ENCODE measurements at regions of chr9 and their contacts with region 1.

Region 1: DNA sequence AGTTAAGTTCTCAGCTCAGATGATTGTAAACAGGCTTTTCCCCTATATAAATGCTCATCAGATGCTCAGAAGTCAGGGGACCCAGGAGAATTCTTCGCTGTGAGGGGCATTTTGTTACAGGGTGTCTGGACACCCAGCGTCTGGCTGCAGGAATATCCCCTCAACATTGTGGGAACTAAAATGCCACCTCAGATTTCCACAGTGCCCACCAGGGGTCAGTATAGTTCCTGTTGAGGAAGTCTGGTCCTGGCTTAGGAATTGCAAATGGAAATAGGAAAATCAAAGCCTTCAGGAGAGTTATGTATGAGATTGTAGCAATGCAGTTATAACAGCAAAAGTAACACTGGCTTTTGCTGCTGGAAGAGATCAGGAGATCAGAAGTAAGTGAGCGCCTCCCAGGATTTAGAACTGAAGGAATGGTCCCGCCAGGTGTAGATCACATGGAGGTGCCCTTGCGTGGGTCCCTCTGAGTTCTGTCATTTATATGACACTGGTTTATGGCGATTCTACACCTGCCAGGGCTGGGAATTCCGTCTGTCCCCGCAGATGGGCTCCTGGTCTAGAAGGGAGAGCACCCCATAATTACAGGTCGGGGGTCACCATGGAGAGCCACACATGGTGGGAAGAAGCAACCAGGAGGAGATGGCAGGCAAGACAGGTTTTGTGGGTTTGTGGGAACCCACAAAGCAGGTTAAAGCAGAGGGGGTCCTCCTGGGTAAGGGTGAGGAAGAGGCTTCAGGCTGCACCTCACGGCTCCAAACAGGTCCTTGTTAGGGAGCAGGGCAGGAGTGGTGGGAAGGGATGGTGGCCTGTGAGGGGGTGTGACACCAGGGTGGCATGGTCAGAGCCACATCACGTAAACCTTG is 47.0 kb upstream of the CTSL start:
- DNase-seq: peak in 40 of 42 donors; percentile 47 to 90 (median 72)

Region 2: GRCh38 chr9:87395804-87396479 is 282.9 kb before region 1 on chr9:
- intact Hi-C with region 1: no loop called
- DNase-seq: no peak

Region 3: DNA sequence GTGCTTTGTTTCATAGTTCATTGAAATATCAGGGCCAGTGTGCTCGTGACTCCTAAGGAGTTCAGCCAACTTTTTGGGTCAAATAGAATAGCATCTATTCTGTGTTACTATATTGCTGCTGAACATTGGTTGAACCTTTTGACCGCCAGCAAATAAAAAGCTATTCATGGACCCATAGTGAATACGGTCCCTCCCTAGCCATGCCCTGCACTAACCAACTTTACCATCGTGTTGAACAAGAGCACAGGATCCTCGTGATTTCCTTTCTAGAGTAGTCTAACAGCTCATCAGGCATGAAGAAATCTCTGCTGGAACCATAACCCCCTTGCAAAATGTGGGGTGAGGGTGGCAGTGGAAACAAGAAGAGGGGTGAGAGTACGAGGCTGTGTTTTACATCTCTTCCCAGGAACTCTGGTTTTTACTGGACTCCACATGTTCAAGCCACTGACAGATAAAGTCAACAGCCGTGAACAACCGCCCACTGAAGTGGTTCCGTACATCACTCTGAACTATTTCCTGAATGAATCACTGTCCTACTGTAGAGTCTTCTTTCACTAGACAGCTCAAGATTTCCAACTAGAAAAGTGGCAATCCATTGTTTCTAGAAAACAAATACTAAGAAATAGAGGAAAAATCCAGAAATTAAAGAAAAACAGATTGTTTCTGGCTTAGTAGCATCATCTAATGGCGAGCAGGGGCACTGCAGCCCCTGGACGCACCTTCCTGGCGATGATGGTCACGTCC is 133.7 kb after region 1 on chr9:
- intact Hi-C with region 1: loop called (anchors 5 kb)
- DNase-seq: peak in 19 of 42 donors; percentile 8 to 63 (median 33)

Region 4: DNA sequence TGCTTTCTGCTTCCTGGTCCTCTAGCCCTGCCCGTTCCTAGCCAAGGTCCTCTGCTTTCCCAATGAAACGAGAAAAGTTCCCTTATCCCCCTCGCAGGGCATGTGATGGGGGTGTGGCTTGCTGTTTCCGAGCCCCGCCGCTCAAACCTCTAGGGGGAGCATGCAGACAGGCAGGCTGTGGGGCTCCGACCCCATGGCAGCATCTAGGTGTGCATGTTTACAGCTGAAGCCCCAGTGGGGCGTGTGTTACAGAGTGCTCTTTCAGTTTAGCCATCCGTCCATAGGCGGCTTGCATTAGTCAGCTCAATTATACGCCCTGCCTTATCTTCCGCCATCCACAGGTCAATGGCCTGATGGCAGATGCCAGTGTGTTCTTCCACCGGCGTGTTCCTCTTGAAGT is 155.5 kb after region 1 on chr9:
- intact Hi-C with region 1: no loop called
- DNase-seq: no peak

Measured in head of caudate nucleus (tissue), 42 donors.